ENCODE measurements at regions of chr2 and their contacts with region 1.

Region 1: GRCh38 chr2:19863303-19864041 is 38.3 kb downstream of the TTC32 start:
- DNase-seq: peak; percentile 40 to 55
- ATAC-seq: peak; percentile 62 to 85
- H3K4me3 ChIP-seq: peak overlapping the region in 1 of 4 donors; percentile 35
- H3K27ac ChIP-seq: no peak overlapping the region
- H3K4me1 ChIP-seq: no peaks in the 10 kb centered on the region
- H3K27me3 ChIP-seq: peaks cover 0 to 4% (median under 1%) of the 10 kb centered on the region in 3 donors
- CTCF ChIP-seq: peak; percentile 94 to 99 (median 97)
- POLR2A ChIP-seq: no peak

Region 2: DNA sequence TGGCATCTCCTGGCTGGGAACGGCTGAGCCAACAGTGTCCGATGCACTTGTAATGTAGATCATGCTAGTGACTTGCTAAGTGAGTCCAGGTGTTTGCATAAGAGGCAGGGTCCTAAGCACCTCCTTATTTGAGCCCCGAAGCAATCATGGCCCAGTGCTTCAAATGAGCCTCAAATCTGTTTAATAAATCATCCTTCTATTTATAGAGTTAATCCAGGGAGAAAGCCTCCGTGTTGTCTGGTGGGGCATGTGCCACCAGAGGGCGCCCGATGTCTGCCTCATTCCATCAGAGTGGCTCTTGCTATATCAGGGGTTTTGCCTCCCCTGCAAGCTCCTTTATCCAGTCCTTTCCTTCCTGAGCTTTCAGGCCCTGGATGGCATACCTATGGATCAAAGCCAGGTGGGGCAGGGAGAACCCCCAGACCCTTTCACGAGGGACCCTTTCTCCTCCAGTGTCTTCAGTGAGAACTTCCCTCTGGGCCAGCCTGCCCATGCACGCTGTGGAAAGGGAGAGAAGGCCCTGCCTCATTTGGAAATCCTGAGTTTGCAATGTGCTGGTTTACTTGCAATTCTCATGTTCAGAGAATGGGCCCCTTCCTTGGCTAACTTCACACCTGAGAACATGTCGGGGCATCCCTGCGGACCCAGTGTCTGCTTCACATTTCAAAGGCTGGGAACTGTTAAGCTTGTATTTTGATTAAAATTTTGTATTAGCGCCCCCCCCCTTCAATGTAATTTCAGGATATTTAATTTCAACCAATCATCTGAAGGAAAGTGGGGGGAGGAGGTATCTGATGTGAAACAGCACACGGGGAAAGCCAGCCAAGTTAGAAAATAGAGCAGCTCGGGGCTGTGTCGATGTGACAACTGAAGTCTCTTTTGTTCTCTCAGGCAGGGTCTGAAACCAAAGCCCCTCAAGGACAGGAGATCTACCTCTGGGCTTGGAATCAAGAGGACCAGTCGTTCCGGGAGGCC is 1342.7 kb before region 1 on chr2:
- in situ Hi-C with region 1: loop called in 3 of 4 experiments (anchors 10 to 25 kb)
- intact Hi-C with region 1: loop called (anchors 1 kb)
- DNase-seq: peak; percentile 49 to 81
- ATAC-seq: peak; percentile 85 to 96
- H3K4me3 ChIP-seq: peak overlapping the region in 2 of 4 donors; percentile 4 to 26
- H3K27ac ChIP-seq: peak overlapping the region; percentile 13 to 52 (median 38)
- H3K4me1 ChIP-seq: peaks cover 14 to 39% of the 10 kb centered on the region in 2 donors
- H3K27me3 ChIP-seq: no peaks in the 10 kb centered on the region
- CTCF ChIP-seq: peak; percentile 76 to 90 (median 88)
- POLR2A ChIP-seq: no peak

Region 3: GRCh38 chr2:18987592-18988073 is 875.8 kb before region 1 on chr2:
- in situ Hi-C with region 1: no loop called
- intact Hi-C with region 1: loop called (anchors 10 kb)
- DNase-seq: peak; percentile 58 to 66
- ATAC-seq: peak; percentile 60 to 85
- H3K4me3 ChIP-seq: no peak overlapping the region
- H3K27ac ChIP-seq: no peak overlapping the region
- H3K4me1 ChIP-seq: peaks cover 5 to 14% of the 10 kb centered on the region in 2 donors
- H3K27me3 ChIP-seq: no peaks in the 10 kb centered on the region
- CTCF ChIP-seq: peak in 2 of 5 experiments; percentile 33 to 42
- POLR2A ChIP-seq: no peak

Region 4: GRCh38 chr2:19362755-19363473 is 500.6 kb before region 1 on chr2:
- in situ Hi-C with region 1: loop called (anchors 10 kb)
- intact Hi-C with region 1: loop called (anchors 5 kb)
- DNase-seq: peak; percentile 52 to 58
- ATAC-seq: peak; percentile 59 to 78
- H3K4me3 ChIP-seq: peak overlapping the region; percentile 58 to 92 (median 62)
- H3K27ac ChIP-seq: peak overlapping the region in 1 of 4 donors; percentile 8
- H3K4me1 ChIP-seq: peaks cover 6 to 30% of the 10 kb centered on the region in 2 donors
- H3K27me3 ChIP-seq: peaks cover 0 to 27% (median 13%) of the 10 kb centered on the region in 3 donors
- CTCF ChIP-seq: peak; percentile 47 to 84 (median 76)
- POLR2A ChIP-seq: no peak

Region 5: GRCh38 chr2:19738707-19739106 is 124.8 kb before region 1 on chr2:
- in situ Hi-C with region 1: no loop called
- intact Hi-C with region 1: loop called (anchors 5 kb)
- DNase-seq: peak; percentile 77 to 82
- ATAC-seq: peak; percentile 76 to 88
- H3K4me3 ChIP-seq: peak overlapping the region in 1 of 4 donors; percentile 6
- H3K27ac ChIP-seq: peak overlapping the region; percentile 80 to 88 (median 81)
- H3K4me1 ChIP-seq: peaks cover 38 to 51% of the 10 kb centered on the region in 2 donors
- H3K27me3 ChIP-seq: no peaks in the 10 kb centered on the region
- CTCF ChIP-seq: no peak
- POLR2A ChIP-seq: no peak